ENCODE measurements at regions of chr17 and their contacts with region 1.

Region 1: DNA sequence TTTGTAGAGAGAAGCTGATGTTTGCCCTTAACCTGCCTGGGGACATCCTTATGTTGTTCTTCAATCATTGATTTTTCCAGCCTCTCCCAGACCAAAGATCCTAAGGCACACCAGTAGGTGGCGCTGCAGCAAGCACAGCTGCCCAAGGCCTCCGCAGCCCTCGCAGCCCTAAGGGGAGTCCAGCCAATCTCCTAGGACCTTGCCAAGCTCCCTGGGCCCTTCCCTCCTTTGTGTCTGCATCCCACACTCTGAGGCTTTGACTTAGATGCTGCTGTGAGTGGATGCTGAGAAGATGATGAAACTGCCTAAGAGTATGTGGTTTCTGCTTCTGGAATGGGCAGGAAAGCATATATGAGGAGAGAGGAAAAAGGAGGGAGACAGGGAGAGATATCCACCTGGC is 47.1 kb downstream of the SPACA3 start:
- DNase-seq: no peak
- H3K4me3 ChIP-seq: no peak overlapping the region
- CTCF ChIP-seq: peak; percentile 58

Region 2: GRCh38 chr17:32849879-32850278 is 188.9 kb before region 1 on chr17:
- CTCF ChIA-PET with region 1: no interaction called
- POLR2A ChIA-PET with region 1: no interaction called
- DNase-seq: no peak
- H3K4me3 ChIP-seq: no peak overlapping the region
- CTCF ChIP-seq: no peak

Region 3: DNA sequence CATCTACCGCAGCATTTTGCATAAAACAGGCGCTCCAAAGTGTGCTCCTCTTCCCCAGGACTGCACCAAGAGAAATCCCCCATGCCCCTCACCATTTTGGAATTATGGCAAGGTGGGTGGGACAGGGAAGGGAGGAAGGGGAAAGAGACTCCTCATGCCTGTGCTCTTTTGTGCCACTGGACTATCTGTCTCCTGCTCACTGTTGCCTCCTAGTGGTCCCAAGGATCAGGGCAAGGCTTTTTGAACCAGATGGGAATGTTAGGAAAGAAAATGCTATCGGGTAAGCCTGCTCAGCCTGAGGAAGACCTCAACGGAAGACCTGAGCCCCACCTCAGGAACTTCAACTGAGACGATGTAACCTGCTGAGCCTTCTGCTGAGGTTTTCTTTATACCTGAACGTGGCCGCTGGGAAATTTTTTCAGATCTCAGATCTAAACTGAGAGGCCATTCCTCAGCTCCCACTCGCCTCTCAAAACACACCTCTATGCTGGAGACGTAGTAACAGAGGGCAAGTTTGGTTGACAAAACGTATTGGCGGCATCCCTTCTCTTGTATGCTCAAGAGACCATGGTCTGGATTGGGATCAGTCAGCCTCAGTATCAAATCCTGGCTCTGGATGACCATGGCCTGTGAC is 11.2 kb after region 1 on chr17:
- CTCF ChIA-PET with region 1: interaction called, 12 read pairs
- POLR2A ChIA-PET with region 1: no interaction called
- DNase-seq: no peak
- H3K4me3 ChIP-seq: no peak overlapping the region
- CTCF ChIP-seq: peak; percentile 91

Region 4: GRCh38 chr17:33674685-33675084 is 635.9 kb after region 1 on chr17:
- CTCF ChIA-PET with region 1: interaction called, 11 read pairs
- POLR2A ChIA-PET with region 1: no interaction called
- DNase-seq: peak; percentile 4
- H3K4me3 ChIP-seq: no peak overlapping the region
- CTCF ChIP-seq: peak; percentile 79